ENCODE measurements at regions of chr13 and their contacts with region 1.

Region 1: GRCh38 chr13:74056801-74057542 is 77.2 kb downstream of the KLF12 start:
- DNase-seq: no peak
- ATAC-seq: no peak
- H3K4me3 ChIP-seq: no peak overlapping the region
- H3K4me3 Mint-ChIP-seq: no peak overlapping the region
- H3K27ac ChIP-seq: no peak overlapping the region
- H3K27ac Mint-ChIP-seq: peak overlapping the region; percentile 47
- H3K4me1 ChIP-seq: peaks cover 50% of the 10 kb centered on the region
- H3K4me1 Mint-ChIP-seq: peaks cover 85% of the 10 kb centered on the region
- H3K27me3 ChIP-seq: no peaks in the 10 kb centered on the region
- H3K27me3 Mint-ChIP-seq: no peaks in the 10 kb centered on the region
- CTCF ChIP-seq: no peak

Region 2: GRCh38 chr13:73998631-73999030 is 58.3 kb before region 1 on chr13:
- CTCF ChIA-PET with region 1: no interaction called
- POLR2A ChIA-PET with region 1: no interaction called
- intact Hi-C with region 1: no loop called
- DNase-seq: peak in 1 of 9 experiments; percentile 45
- ATAC-seq: peak; percentile 61
- H3K4me3 ChIP-seq: no peak overlapping the region
- H3K4me3 Mint-ChIP-seq: no peak overlapping the region
- H3K27ac ChIP-seq: no peak overlapping the region
- H3K27ac Mint-ChIP-seq: peak overlapping the region; percentile 34
- H3K4me1 ChIP-seq: peaks cover 18% of the 10 kb centered on the region
- H3K4me1 Mint-ChIP-seq: peaks cover 70% of the 10 kb centered on the region
- H3K27me3 ChIP-seq: no peaks in the 10 kb centered on the region
- H3K27me3 Mint-ChIP-seq: no peaks in the 10 kb centered on the region
- CTCF ChIP-seq: no peak

Region 3: GRCh38 chr13:74015137-74015536 is 41.8 kb before region 1 on chr13:
- CTCF ChIA-PET with region 1: no interaction called
- POLR2A ChIA-PET with region 1: no interaction called
- intact Hi-C with region 1: loop called in 1 of 2 experiments (anchors 5 kb)
- DNase-seq: peak in 2 of 9 experiments; percentile 15 to 36
- ATAC-seq: peak; percentile 63
- H3K4me3 ChIP-seq: no peak overlapping the region
- H3K4me3 Mint-ChIP-seq: no peak overlapping the region
- H3K27ac ChIP-seq: no peak overlapping the region
- H3K27ac Mint-ChIP-seq: no peak overlapping the region
- H3K4me1 ChIP-seq: peaks cover 15% of the 10 kb centered on the region
- H3K4me1 Mint-ChIP-seq: peaks cover 71% of the 10 kb centered on the region
- H3K27me3 ChIP-seq: no peaks in the 10 kb centered on the region
- H3K27me3 Mint-ChIP-seq: no peaks in the 10 kb centered on the region
- CTCF ChIP-seq: peak; percentile 44

Region 4: GRCh38 chr13:74040200-74040599 is 16.8 kb before region 1 on chr13:
- CTCF ChIA-PET with region 1: interaction called, 3 read pairs
- POLR2A ChIA-PET with region 1: interaction called, 4 read pairs
- intact Hi-C with region 1: loop called in 1 of 2 experiments (anchors 2 kb)
- DNase-seq: peak in 4 of 9 experiments; percentile 26 to 43 (median 34)
- ATAC-seq: peak; percentile 66
- H3K4me3 ChIP-seq: no peak overlapping the region
- H3K4me3 Mint-ChIP-seq: no peak overlapping the region
- H3K27ac ChIP-seq: no peak overlapping the region
- H3K27ac Mint-ChIP-seq: no peak overlapping the region
- H3K4me1 ChIP-seq: peaks cover 25% of the 10 kb centered on the region
- H3K4me1 Mint-ChIP-seq: peaks cover 75% of the 10 kb centered on the region
- H3K27me3 ChIP-seq: no peaks in the 10 kb centered on the region
- H3K27me3 Mint-ChIP-seq: no peaks in the 10 kb centered on the region
- CTCF ChIP-seq: peak; percentile 28

Region 5: DNA sequence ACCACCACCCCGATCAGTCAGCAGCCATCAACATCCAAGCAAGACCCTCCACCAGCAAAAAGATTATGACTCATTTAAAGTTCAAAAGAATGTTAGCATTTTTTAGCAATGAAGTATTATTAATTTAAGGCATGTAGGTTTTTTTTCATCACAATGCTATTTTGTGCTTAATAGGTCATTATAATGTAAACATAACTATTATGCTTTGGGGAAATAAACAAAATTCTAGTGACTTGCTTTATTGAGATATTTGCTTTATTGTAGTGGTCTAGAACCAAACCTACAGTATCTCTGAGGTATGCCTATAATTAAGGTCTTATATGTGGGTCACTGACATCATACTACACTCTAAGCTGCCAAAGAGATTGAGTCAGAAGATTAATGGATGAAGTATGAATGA is 57.2 kb after region 1 on chr13:
- CTCF ChIA-PET with region 1: no interaction called
- POLR2A ChIA-PET with region 1: no interaction called
- intact Hi-C with region 1: no loop called
- DNase-seq: no peak
- ATAC-seq: no peak
- H3K4me3 ChIP-seq: no peak overlapping the region
- H3K4me3 Mint-ChIP-seq: no peak overlapping the region
- H3K27ac ChIP-seq: no peak overlapping the region
- H3K27ac Mint-ChIP-seq: peak overlapping the region; percentile 42
- H3K4me1 ChIP-seq: peaks cover 24% of the 10 kb centered on the region
- H3K4me1 Mint-ChIP-seq: peaks cover 77% of the 10 kb centered on the region
- H3K27me3 ChIP-seq: no peaks in the 10 kb centered on the region
- H3K27me3 Mint-ChIP-seq: no peaks in the 10 kb centered on the region
- CTCF ChIP-seq: no peak

Region 6: DNA sequence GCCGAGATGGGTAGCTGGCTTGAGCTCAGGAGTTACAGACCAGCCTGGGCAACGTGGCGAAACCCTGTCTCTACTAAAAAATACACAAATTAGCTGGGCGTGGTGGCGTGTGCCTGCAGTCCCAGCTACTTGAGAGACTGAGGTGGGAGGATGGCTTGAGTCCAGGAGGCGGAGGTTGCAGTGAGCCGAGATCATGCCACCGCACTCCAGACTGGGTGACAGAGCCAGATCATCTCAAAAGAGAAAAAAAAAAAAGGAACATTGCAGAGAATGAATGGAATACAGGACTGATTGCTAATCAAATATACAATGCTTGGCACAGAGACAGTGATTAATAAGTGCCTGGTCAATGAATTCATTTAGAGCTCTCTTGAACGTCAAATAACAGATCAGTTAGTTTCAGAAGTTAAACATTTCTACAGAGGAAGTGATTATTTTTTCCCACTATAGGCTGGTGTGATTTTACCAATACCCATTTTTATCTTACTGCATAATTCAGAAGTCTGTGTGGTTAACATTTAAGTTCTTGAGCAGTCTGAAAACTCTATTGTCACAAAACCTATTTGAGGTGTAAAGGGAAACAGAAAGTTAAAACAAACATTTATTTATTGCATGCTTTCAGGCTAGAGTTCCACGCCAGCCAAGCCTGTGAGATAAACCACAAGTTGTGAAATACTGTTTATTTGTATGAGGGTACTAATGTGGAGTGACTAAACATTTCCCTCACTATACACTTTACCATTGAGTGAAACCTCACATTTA is 1432.7 kb after region 1 on chr13:
- CTCF ChIA-PET with region 1: no interaction called
- POLR2A ChIA-PET with region 1: no interaction called
- intact Hi-C with region 1: no loop called
- DNase-seq: peak in 2 of 9 experiments; percentile 23 to 45
- ATAC-seq: peak; percentile 29
- H3K4me3 ChIP-seq: peak overlapping the region in 1 of 2 experiments; percentile 12
- H3K4me3 Mint-ChIP-seq: no peak overlapping the region
- H3K27ac ChIP-seq: peak overlapping the region in 1 of 2 experiments; percentile 28
- H3K27ac Mint-ChIP-seq: no peak overlapping the region
- H3K4me1 ChIP-seq: no peaks in the 10 kb centered on the region
- H3K4me1 Mint-ChIP-seq: no peaks in the 10 kb centered on the region
- H3K27me3 ChIP-seq: peaks cover 0 to 7% of the 10 kb centered on the region in 2 experiments
- H3K27me3 Mint-ChIP-seq: peaks cover 23% of the 10 kb centered on the region
- CTCF ChIP-seq: no peak